T-cell (primary cell): ENCODE measurements at regions of chr15 and their contacts with region 1.

Region 1: GRCh38 chr15:40807028-40807887 is at the starts of genes DNAJC17 and ZFYVE19:
- DNase-seq: peak; percentile 83 to 98 (median 93)
- ATAC-seq: peak; percentile 97 to 99 (median 98)
- H3K4me3 ChIP-seq: peak within 1 kb of the TSS; percentile 93 to 99
- H3K4me3 Mint-ChIP-seq: peak within 1 kb of the TSS; percentile 93 to 99 (median 95)
- H3K27ac ChIP-seq: peak within 1 kb of the TSS; percentile 86
- H3K27ac Mint-ChIP-seq: peak within 1 kb of the TSS; percentile 95 to 98
- H3K4me1 ChIP-seq: peaks cover 14 to 25% of the 10 kb centered on the region in 2 experiments
- H3K4me1 Mint-ChIP-seq: peaks cover 29 to 32% (median 29%) of the 10 kb centered on the region in 3 donors
- H3K27me3 ChIP-seq: no peaks in the 10 kb centered on the region
- H3K27me3 Mint-ChIP-seq: no peaks in the 10 kb centered on the region
- total RNA-seq, gene DNAJC17: 33.1 to 47.5 (median 45.1) TPM
- total RNA-seq, gene ZFYVE19: 20.0 to 38.9 (median 30.8) TPM

Region 2: DNA sequence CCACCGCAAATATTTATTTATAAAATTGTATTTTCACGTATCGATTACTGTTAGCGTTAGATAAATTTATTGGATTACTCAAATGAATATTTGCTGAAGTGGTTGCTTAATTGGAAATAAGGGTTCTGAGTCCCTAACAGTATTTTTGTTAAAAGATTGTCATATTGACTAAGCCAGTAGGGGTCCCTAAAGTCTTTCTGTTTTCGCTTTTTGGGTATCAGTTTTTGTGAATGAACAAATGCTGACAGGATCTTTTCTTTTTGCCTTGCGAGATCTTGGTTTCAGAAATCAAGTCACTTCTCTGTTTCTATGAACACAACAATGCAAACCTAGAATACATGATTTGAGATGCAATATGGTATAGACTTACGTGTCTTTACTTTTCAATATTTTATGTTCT is 105.2 kb before region 1 on chr15:
- CTCF ChIA-PET with region 1: no interaction called
- POLR2A ChIA-PET with region 1: interaction called in 1 of 2 experiments, 11 read pairs
- DNase-seq: peak in 1 of 35 experiments; percentile 49
- ATAC-seq: no peak
- H3K4me3 ChIP-seq: no peak overlapping the region
- H3K4me3 Mint-ChIP-seq: no peak overlapping the region
- H3K27ac ChIP-seq: no peak overlapping the region
- H3K27ac Mint-ChIP-seq: no peak overlapping the region
- H3K4me1 ChIP-seq: no peaks in the 10 kb centered on the region
- H3K4me1 Mint-ChIP-seq: no peaks in the 10 kb centered on the region
- H3K27me3 ChIP-seq: no peaks in the 10 kb centered on the region
- H3K27me3 Mint-ChIP-seq: no peaks in the 10 kb centered on the region

Region 3: GRCh38 chr15:40838776-40839175 is 31.5 kb after region 1 on chr15:
- CTCF ChIA-PET with region 1: interaction called in 1 of 2 experiments, 8 read pairs
- POLR2A ChIA-PET with region 1: interaction called in 1 of 2 experiments, 18 read pairs
- DNase-seq: no peak
- ATAC-seq: no peak
- H3K4me3 ChIP-seq: no peak overlapping the region
- H3K4me3 Mint-ChIP-seq: no peak overlapping the region
- H3K27ac ChIP-seq: no peak overlapping the region
- H3K27ac Mint-ChIP-seq: no peak overlapping the region
- H3K4me1 ChIP-seq: peaks cover 0 to 5% of the 10 kb centered on the region in 2 experiments
- H3K4me1 Mint-ChIP-seq: peaks cover 0 to 4% (median 4%) of the 10 kb centered on the region in 3 donors
- H3K27me3 ChIP-seq: peaks cover 0 to 8% of the 10 kb centered on the region in 2 experiments
- H3K27me3 Mint-ChIP-seq: peaks cover 4 to 5% of the 10 kb centered on the region in 2 donors